GM12878 (cell line): ENCODE measurements at regions of chr22 and their contacts with region 1.

Region 1: GRCh38 chr22:17222503-17222902 is 3.3 kb upstream of the ADA2 start:
- DNase-seq: no peak
- ATAC-seq: no peak
- H3K4me3 ChIP-seq: no peak overlapping the region
- H3K27ac ChIP-seq: no peak overlapping the region
- H3K4me1 ChIP-seq: peaks cover 38% of the 10 kb centered on the region
- H3K27me3 ChIP-seq: no peaks in the 10 kb centered on the region
- CTCF ChIP-seq: no peak
- EP300 ChIP-seq: no peak
- POLR2A ChIP-seq: no peak
- RAD21 ChIP-seq: no peak

Region 2: GRCh38 chr22:17237038-17237668 is 14.7 kb after region 1 on chr22:
- CTCF ChIA-PET with region 1: interaction called, 9 read pairs
- POLR2A ChIA-PET with region 1: interaction called, 7 read pairs
- RAD21 ChIA-PET with region 1: interaction called, 11 read pairs
- SMC1A ChIA-PET with region 1: interaction called, 23 read pairs
- in situ Hi-C with region 1: no loop called
- intact Hi-C with region 1: loop called (anchors 2 kb)
- DNase-seq: peak; percentile 71
- ATAC-seq: peak; percentile 92
- H3K4me3 ChIP-seq: peak overlapping the region; percentile 57
- H3K27ac ChIP-seq: peak overlapping the region; percentile 83
- H3K4me1 ChIP-seq: peaks cover 22% of the 10 kb centered on the region
- H3K27me3 ChIP-seq: no peaks in the 10 kb centered on the region
- CTCF ChIP-seq: no peak
- EP300 ChIP-seq: peak; percentile 31 to 55; a peak in 2 of 4 replicates
- POLR2A ChIP-seq: no peak; the same call in 1 of the 2 replicates
- RAD21 ChIP-seq: no peak